Activated CD4-positive, alpha-beta memory T cell treated with anti-CD3 and anti-CD28 coated beads for 36 hours (primary cell): ENCODE measurements at regions of chr13 and their contacts with region 1.

Region 1: DNA sequence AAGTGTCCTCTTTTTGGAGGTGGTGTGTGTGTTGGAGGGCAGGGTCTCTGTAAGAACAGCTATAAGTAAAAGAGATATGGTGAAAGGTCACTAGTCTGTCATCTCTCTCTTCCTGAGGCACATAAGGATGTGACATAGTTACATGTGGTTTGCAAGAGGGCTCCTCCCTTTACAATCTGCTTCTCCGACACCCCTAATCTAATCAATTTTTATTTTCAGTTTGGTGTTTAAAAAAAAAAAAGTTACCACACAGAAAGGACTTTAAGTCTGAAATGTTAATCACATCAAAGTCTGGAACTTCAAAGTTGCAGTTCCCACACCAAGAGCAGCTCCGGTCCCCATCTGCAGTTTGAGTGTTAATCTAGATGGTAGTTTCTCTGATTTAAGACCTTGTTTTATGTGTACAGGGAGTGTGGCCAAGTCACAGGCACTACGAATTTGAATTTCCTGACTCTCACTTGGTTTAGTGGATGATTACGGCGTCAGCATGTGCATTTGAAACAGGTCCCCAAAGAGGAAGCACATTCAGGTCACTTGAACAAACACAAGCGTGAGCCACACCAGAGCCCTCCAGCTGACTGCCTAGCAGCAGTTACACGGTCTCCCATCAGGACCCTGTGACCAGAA is 53.1 kb downstream of the FOXO1 start:
- DNase-seq: peak; percentile 77
- H3K4me3 Mint-ChIP-seq: peak overlapping the region; percentile 74
- H3K27ac Mint-ChIP-seq: peak overlapping the region; percentile 97
- H3K4me1 Mint-ChIP-seq: peaks cover 92% of the 10 kb centered on the region
- H3K27me3 Mint-ChIP-seq: no peaks in the 10 kb centered on the region

Region 2: GRCh38 chr13:40485611-40486517 is 127.4 kb before region 1 on chr13:
- CTCF ChIA-PET with region 1: no interaction called
- POLR2A ChIA-PET with region 1: interaction called, 4 read pairs
- intact Hi-C with region 1: loop called (anchors 5 kb)
- DNase-seq: peak; percentile 81
- H3K4me3 Mint-ChIP-seq: peak overlapping the region; percentile 24
- H3K27ac Mint-ChIP-seq: peak overlapping the region; percentile 75
- H3K4me1 Mint-ChIP-seq: peaks cover 78% of the 10 kb centered on the region
- H3K27me3 Mint-ChIP-seq: no peaks in the 10 kb centered on the region

Region 3: GRCh38 chr13:40569024-40569350 is 44.3 kb before region 1 on chr13:
- CTCF ChIA-PET with region 1: no interaction called
- POLR2A ChIA-PET with region 1: no interaction called
- intact Hi-C with region 1: no loop called
- DNase-seq: no peak
- H3K4me3 Mint-ChIP-seq: no peak overlapping the region
- H3K27ac Mint-ChIP-seq: no peak overlapping the region
- H3K4me1 Mint-ChIP-seq: peaks cover 88% of the 10 kb centered on the region
- H3K27me3 Mint-ChIP-seq: no peaks in the 10 kb centered on the region

Region 4: GRCh38 chr13:40597740-40598370 is 15.4 kb before region 1 on chr13:
- CTCF ChIA-PET with region 1: no interaction called
- POLR2A ChIA-PET with region 1: interaction called, 6 read pairs
- intact Hi-C with region 1: loop called (anchors 1 kb)
- DNase-seq: peak; percentile 24
- H3K4me3 Mint-ChIP-seq: peak overlapping the region; percentile 39
- H3K27ac Mint-ChIP-seq: peak overlapping the region; percentile 85
- H3K4me1 Mint-ChIP-seq: peaks cover 87% of the 10 kb centered on the region
- H3K27me3 Mint-ChIP-seq: no peaks in the 10 kb centered on the region

Region 5: DNA sequence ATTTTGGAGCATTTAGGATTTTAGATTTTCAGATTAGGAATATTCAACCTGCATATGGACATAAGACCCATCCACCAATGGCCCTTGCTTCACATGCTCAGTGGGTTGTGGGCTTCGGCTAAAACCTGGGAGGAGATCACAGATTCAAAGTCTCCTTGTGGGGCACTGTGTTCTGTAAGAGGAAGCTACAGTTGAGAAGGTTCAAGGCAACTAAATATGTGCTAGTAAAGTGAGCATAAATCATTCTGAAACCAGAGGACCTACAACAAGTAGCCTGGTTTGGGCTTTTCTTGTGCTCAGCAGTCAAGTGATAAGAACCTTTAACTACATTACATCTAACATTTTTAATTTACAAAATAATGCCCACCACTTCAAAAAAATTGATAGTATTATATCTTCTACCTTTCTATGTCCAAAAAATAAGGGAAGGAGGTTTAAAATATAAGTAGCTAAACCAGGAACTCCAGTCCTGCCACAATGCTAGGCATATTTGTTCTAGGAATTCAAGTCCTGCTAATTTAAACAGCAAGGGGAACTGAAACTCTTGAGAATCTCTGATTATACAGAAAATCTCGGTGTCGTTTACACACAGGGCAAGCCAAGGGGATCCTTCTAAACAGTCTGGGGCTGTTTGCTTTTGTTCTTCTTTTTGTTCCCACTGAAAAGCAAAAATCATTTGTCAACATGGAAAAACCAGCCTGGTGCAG is 16.5 kb after region 1 on chr13:
- CTCF ChIA-PET with region 1: no interaction called
- POLR2A ChIA-PET with region 1: interaction called, 10 read pairs
- intact Hi-C with region 1: no loop called
- DNase-seq: no peak
- H3K4me3 Mint-ChIP-seq: no peak overlapping the region
- H3K27ac Mint-ChIP-seq: peak overlapping the region; percentile 75
- H3K4me1 Mint-ChIP-seq: peaks cover 80% of the 10 kb centered on the region
- H3K27me3 Mint-ChIP-seq: no peaks in the 10 kb centered on the region

Region 6: DNA sequence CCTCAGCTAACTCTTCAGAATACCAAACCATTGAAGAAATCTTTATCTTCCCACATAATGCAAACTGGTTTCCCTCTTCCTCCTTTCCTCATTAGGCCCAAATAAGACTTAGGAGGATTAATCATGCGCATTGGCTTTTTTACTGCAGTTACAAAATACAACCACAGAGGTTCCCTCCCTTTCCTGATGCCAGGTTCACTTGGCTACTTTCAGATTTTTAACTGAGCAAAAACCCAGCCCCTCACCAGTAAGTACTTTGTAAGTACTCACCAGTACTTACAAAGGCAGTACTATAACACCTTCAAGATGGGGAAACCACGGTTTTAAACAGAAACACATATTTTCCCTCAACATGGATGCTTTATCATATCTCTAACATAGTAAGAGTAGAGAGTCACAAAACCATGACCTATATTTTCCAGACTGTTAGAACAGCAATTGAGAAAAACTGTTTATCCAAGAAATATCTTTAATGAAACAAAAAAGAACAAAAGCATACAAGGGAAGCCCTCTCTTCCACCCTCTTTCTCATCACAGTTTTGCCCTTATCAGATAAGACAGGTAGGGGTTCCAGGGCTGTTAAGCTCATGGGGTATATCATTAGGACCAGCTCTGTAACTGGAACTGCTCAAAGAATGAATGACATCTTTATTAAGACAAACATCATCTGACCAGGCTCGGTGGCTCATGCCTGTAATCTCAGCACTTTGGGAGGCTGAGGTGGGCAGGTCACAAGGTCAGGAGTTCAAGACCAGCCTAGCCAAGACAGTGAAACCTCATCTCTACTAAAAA is 40.4 kb after region 1 on chr13:
- CTCF ChIA-PET with region 1: no interaction called
- POLR2A ChIA-PET with region 1: interaction called, 3 read pairs
- intact Hi-C with region 1: loop called (anchors 2 kb)
- DNase-seq: peak; percentile 43
- H3K4me3 Mint-ChIP-seq: peak overlapping the region; percentile 70
- H3K27ac Mint-ChIP-seq: peak overlapping the region; percentile 89
- H3K4me1 Mint-ChIP-seq: peaks cover 90% of the 10 kb centered on the region
- H3K27me3 Mint-ChIP-seq: no peaks in the 10 kb centered on the region